ENCODE measurements at regions of chr19 and their contacts with region 1.

Region 1: GRCh38 chr19:5547881-5548280 is 19.9 kb downstream of the TINCR start:
- DNase-seq: peak; percentile 48 to 50
- H3K4me3 ChIP-seq: no peak overlapping the region
- H3K27ac ChIP-seq: no peak overlapping the region
- H3K4me1 ChIP-seq: no peaks in the 10 kb centered on the region
- H3K27me3 ChIP-seq: no peaks in the 10 kb centered on the region
- CTCF ChIP-seq: peak; percentile 70

Region 2: DNA sequence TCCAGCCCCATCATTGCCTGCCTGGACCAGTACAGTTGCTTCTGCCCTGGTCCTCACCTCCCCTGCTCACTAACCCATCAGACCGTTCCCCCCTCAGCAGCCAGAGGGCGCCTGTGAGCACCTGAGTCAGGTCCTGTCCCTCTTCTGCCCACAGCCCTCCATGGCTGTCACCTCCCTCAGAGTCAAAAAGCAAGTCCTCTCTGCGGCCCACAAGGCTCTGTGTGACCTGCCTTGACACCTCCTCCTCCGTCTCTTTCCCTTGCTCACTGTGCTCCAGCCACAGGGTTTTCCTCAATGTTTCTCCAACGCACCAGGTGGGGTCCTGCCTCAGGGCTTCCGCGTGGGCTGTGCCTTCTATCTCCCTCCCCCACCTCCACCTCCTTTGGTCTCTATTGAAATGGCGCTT is 177.9 kb before region 1 on chr19:
- CTCF ChIA-PET with region 1: no interaction called
- POLR2A ChIA-PET with region 1: interaction called, 3 read pairs
- intact Hi-C with region 1: loop called (anchors 10 kb)
- DNase-seq: peak in 1 of 2 experiments; percentile 35
- H3K4me3 ChIP-seq: no peak overlapping the region
- H3K27ac ChIP-seq: no peak overlapping the region
- H3K4me1 ChIP-seq: no peaks in the 10 kb centered on the region
- H3K27me3 ChIP-seq: 0 out of 2 replicates have a peak, but pooled peaks cover 6% of the 10 kb centered on the region
- CTCF ChIP-seq: peak; percentile 68

Region 3: DNA sequence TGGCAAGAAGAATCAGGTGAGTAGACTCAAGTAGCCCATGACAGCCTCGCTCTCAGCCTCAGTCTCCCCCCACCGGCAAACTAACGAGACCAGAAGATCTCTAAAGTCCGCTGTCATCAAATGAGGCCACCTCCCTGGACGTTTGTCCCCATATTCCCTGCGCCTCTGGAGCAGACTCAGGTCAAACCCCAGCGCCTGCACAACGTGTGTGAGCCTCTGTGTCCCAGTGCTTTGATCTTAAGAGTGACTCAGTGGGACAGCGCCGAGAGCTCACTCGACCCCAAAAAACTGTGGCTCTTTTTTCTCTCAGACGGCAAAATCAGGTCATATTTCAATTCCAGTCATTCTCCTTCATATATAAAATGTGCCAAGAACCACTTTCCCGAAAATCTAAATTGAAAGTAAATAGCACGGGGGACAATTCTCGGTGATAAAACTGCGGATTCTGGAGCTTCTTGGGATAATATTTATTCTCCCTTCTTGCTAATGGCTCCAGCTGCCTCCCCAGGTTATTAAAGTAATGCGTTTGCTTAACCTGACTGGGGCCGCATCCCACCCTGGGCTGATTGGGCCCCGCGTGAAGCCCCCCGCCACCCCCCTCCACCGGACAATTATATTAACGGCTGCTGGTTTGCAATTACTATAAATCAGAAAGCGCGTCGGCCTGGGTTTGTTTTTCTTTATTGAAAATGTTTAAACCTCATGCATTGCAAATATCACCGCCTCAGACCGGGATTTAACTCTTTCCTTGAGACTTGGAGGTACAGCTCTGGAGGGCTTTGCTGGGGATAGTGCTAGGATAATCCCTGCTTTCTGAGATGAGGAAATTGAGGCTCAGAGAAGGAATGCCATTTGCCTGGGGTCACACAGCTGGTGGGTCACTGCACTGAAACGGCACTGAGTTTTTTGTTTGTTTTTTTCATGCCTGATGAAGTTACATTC is 130.1 kb before region 1 on chr19:
- CTCF ChIA-PET with region 1: interaction called, 11 read pairs
- POLR2A ChIA-PET with region 1: no interaction called
- intact Hi-C with region 1: no loop called
- DNase-seq: no peak
- H3K4me3 ChIP-seq: no peak overlapping the region
- H3K27ac ChIP-seq: no peak overlapping the region
- H3K4me1 ChIP-seq: no peaks in the 10 kb centered on the region
- H3K27me3 ChIP-seq: peaks cover 76% of the 10 kb centered on the region
- CTCF ChIP-seq: no peak

Region 4: GRCh38 chr19:5577785-5578493 is 30.1 kb after region 1 on chr19:
- CTCF ChIA-PET with region 1: interaction called, 9 read pairs
- POLR2A ChIA-PET with region 1: no interaction called
- intact Hi-C with region 1: loop called (anchors 1 kb)
- DNase-seq: peak in 1 of 2 experiments; percentile 59
- H3K4me3 ChIP-seq: no peak overlapping the region
- H3K27ac ChIP-seq: no peak overlapping the region
- H3K4me1 ChIP-seq: peaks cover 13% of the 10 kb centered on the region
- H3K27me3 ChIP-seq: no peaks in the 10 kb centered on the region
- CTCF ChIP-seq: peak; percentile 91

Region 5: GRCh38 chr19:5753743-5754142 is 205.9 kb after region 1 on chr19:
- CTCF ChIA-PET with region 1: no interaction called
- POLR2A ChIA-PET with region 1: no interaction called
- intact Hi-C with region 1: no loop called
- DNase-seq: no peak
- H3K4me3 ChIP-seq: no peak overlapping the region
- H3K27ac ChIP-seq: no peak overlapping the region
- H3K4me1 ChIP-seq: no peaks in the 10 kb centered on the region
- H3K27me3 ChIP-seq: no peaks in the 10 kb centered on the region
- CTCF ChIP-seq: no peak